ENCODE measurements at regions of chr14 and their contacts with region 1.

Region 1: GRCh38 chr14:94136575-94137331 is 7.3 kb upstream of the IFI27L2 start:
- DNase-seq: peak; percentile 93
- ATAC-seq: peak; percentile 90
- H3K4me3 Mint-ChIP-seq: no peak overlapping the region
- H3K27ac Mint-ChIP-seq: no peak overlapping the region
- H3K4me1 Mint-ChIP-seq: peaks cover 5% of the 10 kb centered on the region
- H3K27me3 Mint-ChIP-seq: peaks cover 6% of the 10 kb centered on the region

Region 2: GRCh38 chr14:92612988-92613658 is 1523.6 kb before region 1 on chr14:
- CTCF ChIA-PET with region 1: no interaction called
- POLR2A ChIA-PET with region 1: no interaction called
- intact Hi-C with region 1: no loop called
- DNase-seq: peak; percentile 82
- ATAC-seq: peak; percentile 60
- H3K4me3 Mint-ChIP-seq: no peak overlapping the region
- H3K27ac Mint-ChIP-seq: no peak overlapping the region
- H3K4me1 Mint-ChIP-seq: peaks cover 47% of the 10 kb centered on the region
- H3K27me3 Mint-ChIP-seq: no peaks in the 10 kb centered on the region

Region 3: DNA sequence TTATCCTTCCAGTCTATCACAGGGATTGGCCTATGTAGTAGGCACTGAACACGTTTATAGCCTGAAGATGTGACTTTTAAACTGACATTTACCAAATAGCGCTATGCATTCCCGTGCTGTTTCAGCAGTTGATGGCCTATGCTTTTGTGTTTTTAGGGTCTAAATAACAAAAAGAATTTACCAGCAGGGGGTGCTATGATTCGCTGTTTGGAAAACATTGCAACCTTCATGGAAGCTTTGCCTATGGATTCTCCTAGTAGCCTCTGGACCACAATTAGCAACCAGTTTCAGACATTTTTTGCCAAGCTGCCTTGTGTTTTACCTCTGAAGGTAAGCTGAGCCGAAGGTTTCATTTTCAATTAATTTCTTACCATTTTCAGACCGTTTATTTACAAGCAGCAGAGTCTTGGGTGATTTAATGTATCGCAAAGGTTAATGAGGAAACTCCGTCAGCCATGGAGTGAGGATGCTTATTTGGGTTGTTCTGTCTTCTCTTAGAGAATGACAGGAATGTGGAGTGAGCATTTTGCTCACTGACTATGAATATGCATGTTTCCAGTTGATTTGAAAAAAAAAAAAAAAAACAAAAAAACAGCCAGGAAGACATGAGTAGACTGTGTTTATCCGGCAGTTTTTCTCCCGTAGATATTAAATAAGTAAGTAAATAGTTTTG is 481.5 kb before region 1 on chr14:
- CTCF ChIA-PET with region 1: no interaction called
- POLR2A ChIA-PET with region 1: no interaction called
- intact Hi-C with region 1: loop called in 1 of 2 experiments (anchors 2 kb)
- DNase-seq: no peak
- ATAC-seq: no peak
- H3K4me3 Mint-ChIP-seq: no peak overlapping the region
- H3K27ac Mint-ChIP-seq: no peak overlapping the region
- H3K4me1 Mint-ChIP-seq: no peaks in the 10 kb centered on the region
- H3K27me3 Mint-ChIP-seq: peaks cover 29% of the 10 kb centered on the region

Region 4: GRCh38 chr14:94036313-94037050 is 100.3 kb before region 1 on chr14:
- CTCF ChIA-PET with region 1: interaction called, 69 read pairs
- POLR2A ChIA-PET with region 1: interaction called, 9 read pairs
- intact Hi-C with region 1: loop called (anchors 1 kb)
- DNase-seq: peak; percentile 89
- ATAC-seq: peak; percentile 100
- H3K4me3 Mint-ChIP-seq: no peak overlapping the region
- H3K27ac Mint-ChIP-seq: no peak overlapping the region
- H3K4me1 Mint-ChIP-seq: peaks cover 3% of the 10 kb centered on the region
- H3K27me3 Mint-ChIP-seq: no peaks in the 10 kb centered on the region

Region 5: GRCh38 chr14:94153750-94154342 is 17.1 kb after region 1 on chr14:
- CTCF ChIA-PET with region 1: interaction called, 21 read pairs
- POLR2A ChIA-PET with region 1: interaction called, 3 read pairs
- intact Hi-C with region 1: no loop called
- DNase-seq: no peak
- ATAC-seq: no peak
- H3K4me3 Mint-ChIP-seq: no peak overlapping the region
- H3K27ac Mint-ChIP-seq: no peak overlapping the region
- H3K4me1 Mint-ChIP-seq: peaks cover 26% of the 10 kb centered on the region
- H3K27me3 Mint-ChIP-seq: peaks cover 6% of the 10 kb centered on the region

Region 6: DNA sequence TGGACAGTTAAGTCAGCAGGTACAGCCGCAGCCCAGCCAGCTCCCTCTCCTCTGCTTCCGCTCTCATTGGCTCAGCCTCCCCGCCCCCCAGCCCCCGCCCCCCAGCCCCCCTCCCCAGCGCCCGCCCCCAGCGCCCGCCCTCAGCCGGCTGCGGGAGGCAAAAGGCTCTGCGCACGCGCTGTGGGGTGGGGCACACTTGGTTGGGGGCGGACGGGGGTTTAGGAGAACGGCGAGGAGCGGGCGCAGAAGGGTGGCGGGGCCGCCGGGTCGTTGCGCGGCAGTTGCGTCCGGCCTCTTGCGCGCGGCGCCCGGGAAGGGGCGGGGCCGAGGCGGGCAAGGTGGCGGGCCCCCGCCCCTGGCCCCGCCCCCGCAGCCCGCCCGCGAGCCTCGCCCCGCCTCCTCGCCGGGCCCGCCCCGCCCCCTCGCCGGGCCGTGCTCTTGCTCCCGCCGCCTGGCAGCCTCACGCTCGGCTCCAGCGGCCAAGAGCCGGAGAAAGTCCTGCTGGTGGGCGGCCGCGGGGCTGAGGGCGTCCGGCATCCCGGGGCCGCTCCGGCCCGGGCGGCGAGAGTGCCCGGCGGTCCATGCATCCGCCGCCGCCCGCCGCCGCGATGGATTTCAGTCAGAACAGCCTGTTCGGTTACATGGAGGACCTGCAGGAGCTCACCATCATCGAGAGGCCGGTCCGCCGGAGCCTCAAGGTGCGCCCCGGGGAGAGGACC is 37.3 kb after region 1 on chr14 and contains the start of gene PPP4R4:
- CTCF ChIA-PET with region 1: interaction called, 76 read pairs
- POLR2A ChIA-PET with region 1: no interaction called
- intact Hi-C with region 1: loop called (anchors 1 to 2 kb)
- DNase-seq: peak; percentile 96
- ATAC-seq: peak; percentile 89
- H3K4me3 Mint-ChIP-seq: peak within 1 kb of the TSS; percentile 81
- H3K27ac Mint-ChIP-seq: peak within 1 kb of the TSS; percentile 86
- H3K4me1 Mint-ChIP-seq: peaks cover 44% of the 10 kb centered on the region
- H3K27me3 Mint-ChIP-seq: peaks cover 5% of the 10 kb centered on the region
- total RNA-seq, gene PPP4R4: 21.4 TPM

Region 7: GRCh38 chr14:94307410-94307992 is 170.7 kb after region 1 on chr14:
- CTCF ChIA-PET with region 1: interaction called, 10 read pairs
- POLR2A ChIA-PET with region 1: no interaction called
- intact Hi-C with region 1: loop called (anchors 5 kb)
- DNase-seq: no peak
- ATAC-seq: no peak
- H3K4me3 Mint-ChIP-seq: no peak overlapping the region
- H3K27ac Mint-ChIP-seq: no peak overlapping the region
- H3K4me1 Mint-ChIP-seq: no peaks in the 10 kb centered on the region
- H3K27me3 Mint-ChIP-seq: peaks cover 5% of the 10 kb centered on the region

Region 8: GRCh38 chr14:94349276-94349675 is 212.5 kb after region 1 on chr14:
- CTCF ChIA-PET with region 1: no interaction called
- POLR2A ChIA-PET with region 1: no interaction called
- intact Hi-C with region 1: no loop called
- DNase-seq: no peak
- ATAC-seq: no peak
- H3K4me3 Mint-ChIP-seq: no peak overlapping the region
- H3K27ac Mint-ChIP-seq: peak overlapping the region; percentile 66
- H3K4me1 Mint-ChIP-seq: peaks cover 73% of the 10 kb centered on the region
- H3K27me3 Mint-ChIP-seq: no peaks in the 10 kb centered on the region

Region 9: DNA sequence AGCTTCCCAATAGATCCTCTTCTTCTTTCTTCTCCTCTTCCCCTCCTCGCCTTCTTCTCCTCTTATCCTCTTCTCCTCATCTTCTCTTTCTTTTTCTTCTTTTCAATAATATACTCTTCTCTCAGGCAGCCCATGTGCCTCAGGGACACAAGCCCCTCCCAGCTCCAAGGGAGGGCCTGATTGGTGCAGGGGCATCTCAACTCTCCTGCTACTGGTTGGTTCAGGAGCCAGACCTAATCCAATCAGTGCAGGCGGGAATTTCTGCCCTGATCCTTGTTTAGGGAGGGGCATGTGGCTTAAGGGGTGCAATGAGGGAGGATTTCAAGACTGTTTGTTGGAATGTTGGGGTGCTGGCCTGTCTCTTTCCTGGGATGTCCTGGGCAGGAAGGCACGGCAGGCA is 363.5 kb after region 1 on chr14:
- CTCF ChIA-PET with region 1: no interaction called
- POLR2A ChIA-PET with region 1: no interaction called
- intact Hi-C with region 1: no loop called
- DNase-seq: no peak
- ATAC-seq: no peak
- H3K4me3 Mint-ChIP-seq: no peak overlapping the region
- H3K27ac Mint-ChIP-seq: no peak overlapping the region
- H3K4me1 Mint-ChIP-seq: no peaks in the 10 kb centered on the region
- H3K27me3 Mint-ChIP-seq: peaks cover 11% of the 10 kb centered on the region